Activated B cell treated with CpG ODN at 0.5 μM for 24 hours (primary cell): ENCODE measurements at regions of chr17 and their contacts with region 1.

Region 1: DNA sequence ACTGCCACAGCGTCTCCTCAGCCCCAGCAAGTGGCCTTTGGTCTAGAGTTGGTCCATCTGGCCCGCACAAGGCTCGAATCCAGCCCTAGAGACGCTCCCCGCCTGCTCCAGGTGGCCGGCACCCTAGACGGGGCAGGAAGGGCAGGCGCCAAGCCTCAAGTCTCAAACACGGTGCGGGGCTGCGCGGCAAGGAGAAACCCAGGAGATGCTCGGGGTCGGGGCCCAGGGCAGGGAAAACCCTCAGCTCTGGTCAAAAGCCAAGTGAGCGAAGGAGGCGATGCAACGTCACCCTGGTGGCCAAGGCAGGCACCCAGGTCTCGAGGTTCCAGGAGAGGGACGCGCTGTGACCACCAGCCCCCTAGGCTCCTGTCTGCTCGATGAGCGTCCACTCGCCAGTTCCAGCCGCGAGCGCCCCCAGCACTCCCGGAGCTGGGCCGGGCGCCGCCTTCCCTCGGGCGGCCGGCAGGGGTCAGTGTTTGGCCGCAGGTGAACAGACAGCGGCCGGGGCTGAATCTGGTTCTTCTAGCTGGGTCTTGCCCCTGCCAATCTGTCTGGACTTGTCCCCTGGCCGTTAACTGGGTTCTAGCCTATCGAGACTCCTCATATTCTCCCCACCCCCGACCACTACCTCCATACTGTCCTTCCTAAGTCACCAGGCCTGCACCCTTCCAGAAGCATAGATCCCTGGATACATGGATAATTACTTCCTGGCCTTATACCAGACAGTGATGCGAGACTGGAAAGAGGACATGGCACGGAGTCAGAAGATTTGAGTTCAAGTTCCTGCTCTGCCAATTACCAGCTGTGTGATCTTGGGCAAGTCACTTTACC is 44.0 kb downstream of the PRAC1 start:
- DNase-seq: peak; percentile 67
- ATAC-seq: peak; percentile 92
- H3K4me3 Mint-ChIP-seq: peak overlapping the region; percentile 35
- H3K27ac Mint-ChIP-seq: no peak overlapping the region
- H3K4me1 Mint-ChIP-seq: peaks cover 2% of the 10 kb centered on the region
- H3K27me3 Mint-ChIP-seq: peaks cover 34% of the 10 kb centered on the region
- CTCF ChIP-seq: peak; percentile 88

Region 2: DNA sequence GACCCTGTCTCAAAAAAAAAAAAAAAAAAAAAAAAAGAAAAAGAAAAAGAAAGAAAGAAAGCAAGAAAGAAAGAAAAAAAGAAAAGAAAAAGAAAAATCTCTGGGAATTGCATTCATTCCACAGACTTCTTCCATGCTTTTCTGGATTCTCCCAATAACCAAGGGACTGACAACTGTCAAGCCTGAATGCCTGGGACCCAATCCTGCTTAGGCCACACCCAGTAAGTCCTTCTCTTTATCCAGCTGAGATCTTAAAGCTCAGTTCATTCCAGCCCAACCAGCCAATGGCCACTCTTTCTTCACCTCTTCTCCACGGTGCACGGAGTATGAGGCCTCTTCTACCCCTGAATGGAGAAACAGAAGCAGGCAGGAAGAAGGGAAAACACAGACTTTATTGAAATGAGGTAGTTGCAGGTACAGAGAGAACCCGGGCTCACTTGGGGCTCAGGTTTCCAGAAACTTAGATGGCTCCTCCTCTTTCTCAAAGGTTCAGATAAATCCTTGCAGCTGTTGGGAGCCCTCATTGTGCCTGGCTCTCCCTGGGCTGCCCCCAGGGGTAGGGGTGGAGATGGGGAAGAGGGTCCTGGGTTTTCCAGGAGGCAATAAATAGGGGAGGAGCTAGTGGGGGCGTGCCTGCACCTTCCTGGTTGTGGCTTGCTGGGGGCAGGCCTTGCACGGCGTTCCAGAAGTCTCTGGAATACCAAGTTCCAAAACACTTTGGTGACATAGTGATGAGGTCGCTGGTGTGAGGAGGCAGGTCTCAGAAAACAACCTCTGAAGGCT is 150.0 kb before region 1 on chr17:
- CTCF ChIA-PET with region 1: no interaction called
- POLR2A ChIA-PET with region 1: no interaction called
- intact Hi-C with region 1: no loop called
- DNase-seq: no peak
- ATAC-seq: no peak
- H3K4me3 Mint-ChIP-seq: no peak overlapping the region
- H3K27ac Mint-ChIP-seq: no peak overlapping the region
- H3K4me1 Mint-ChIP-seq: no peaks in the 10 kb centered on the region
- H3K27me3 Mint-ChIP-seq: peaks cover 46% of the 10 kb centered on the region
- CTCF ChIP-seq: no peak

Region 3: GRCh38 chr17:48625495-48626244 is 52.7 kb before region 1 on chr17:
- CTCF ChIA-PET with region 1: no interaction called
- POLR2A ChIA-PET with region 1: no interaction called
- intact Hi-C with region 1: no loop called
- DNase-seq: peak; percentile 50
- ATAC-seq: peak; percentile 71
- H3K4me3 Mint-ChIP-seq: peak overlapping the region; percentile 85
- H3K27ac Mint-ChIP-seq: no peak overlapping the region
- H3K4me1 Mint-ChIP-seq: peaks cover 16% of the 10 kb centered on the region
- H3K27me3 Mint-ChIP-seq: peaks cover 72% of the 10 kb centered on the region
- CTCF ChIP-seq: no peak

Region 4: GRCh38 chr17:48655913-48656312 is 22.4 kb before region 1 on chr17:
- CTCF ChIA-PET with region 1: no interaction called
- POLR2A ChIA-PET with region 1: no interaction called
- intact Hi-C with region 1: no loop called
- DNase-seq: no peak
- ATAC-seq: no peak
- H3K4me3 Mint-ChIP-seq: no peak overlapping the region
- H3K27ac Mint-ChIP-seq: no peak overlapping the region
- H3K4me1 Mint-ChIP-seq: peaks cover 5% of the 10 kb centered on the region
- H3K27me3 Mint-ChIP-seq: peaks cover 11% of the 10 kb centered on the region
- CTCF ChIP-seq: no peak

Region 5: GRCh38 chr17:48704361-48705248 is 26.2 kb after region 1 on chr17:
- CTCF ChIA-PET with region 1: interaction called, 11 read pairs
- POLR2A ChIA-PET with region 1: no interaction called
- intact Hi-C with region 1: no loop called
- DNase-seq: no peak
- ATAC-seq: no peak
- H3K4me3 Mint-ChIP-seq: no peak overlapping the region
- H3K27ac Mint-ChIP-seq: no peak overlapping the region
- H3K4me1 Mint-ChIP-seq: no peaks in the 10 kb centered on the region
- H3K27me3 Mint-ChIP-seq: peaks cover 50% of the 10 kb centered on the region
- CTCF ChIP-seq: no peak

Region 6: DNA sequence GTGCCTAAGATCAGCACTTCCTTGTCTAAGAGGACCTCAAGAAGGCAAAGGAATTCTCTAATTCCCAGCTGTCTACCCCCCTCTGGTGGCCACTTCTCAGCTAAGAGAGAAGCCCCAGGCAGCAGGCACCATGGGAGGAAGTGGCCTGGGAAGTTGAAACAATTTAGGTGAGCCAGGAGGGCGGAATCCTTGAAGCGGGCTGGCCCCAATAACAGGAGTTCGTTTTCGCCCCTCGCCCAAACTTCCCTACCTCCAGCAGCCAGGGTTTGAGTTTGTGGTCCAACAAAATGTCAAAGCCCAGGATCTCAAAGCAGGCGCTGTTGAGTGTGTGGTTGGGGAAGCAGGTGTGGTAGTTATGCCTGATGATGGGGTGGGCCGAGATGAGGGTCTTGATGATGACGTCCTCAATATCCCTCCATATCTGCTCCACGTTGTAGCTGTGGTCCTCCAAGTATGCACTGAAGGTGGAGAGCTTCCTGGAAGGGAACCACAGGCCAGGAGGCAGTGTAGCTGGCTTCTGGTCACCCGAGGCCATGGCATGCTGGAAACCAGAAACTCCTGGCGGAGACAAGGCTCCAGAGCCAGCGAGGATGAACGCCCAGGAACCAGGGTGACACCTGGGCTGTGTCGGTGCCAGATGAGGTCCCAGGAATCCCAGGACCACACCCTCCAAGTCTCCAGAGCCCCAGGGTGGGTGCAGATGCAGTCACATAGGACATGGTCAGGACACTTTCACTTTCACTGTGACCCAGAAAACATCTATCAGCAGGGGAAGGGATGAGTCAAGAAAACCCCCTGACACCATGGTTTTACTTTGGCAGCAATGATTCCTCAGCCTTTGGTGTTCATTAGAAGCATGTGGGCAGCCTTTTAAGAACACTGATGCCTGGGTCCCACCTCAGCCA is 113.0 kb after region 1 on chr17:
- CTCF ChIA-PET with region 1: interaction called, 8 read pairs
- POLR2A ChIA-PET with region 1: no interaction called
- intact Hi-C with region 1: loop called (anchors 2 kb)
- DNase-seq: no peak
- ATAC-seq: peak; percentile 42
- H3K4me3 Mint-ChIP-seq: no peak overlapping the region
- H3K27ac Mint-ChIP-seq: no peak overlapping the region
- H3K4me1 Mint-ChIP-seq: peaks cover 5% of the 10 kb centered on the region
- H3K27me3 Mint-ChIP-seq: peaks cover 32% of the 10 kb centered on the region
- CTCF ChIP-seq: no peak

Region 7: GRCh38 chr17:49290690-49291359 is 612.5 kb after region 1 on chr17:
- CTCF ChIA-PET with region 1: interaction called, 6 read pairs
- POLR2A ChIA-PET with region 1: no interaction called
- intact Hi-C with region 1: loop called (anchors 10 kb)
- DNase-seq: no peak
- ATAC-seq: no peak
- H3K4me3 Mint-ChIP-seq: no peak overlapping the region
- H3K27ac Mint-ChIP-seq: no peak overlapping the region
- H3K4me1 Mint-ChIP-seq: no peaks in the 10 kb centered on the region
- H3K27me3 Mint-ChIP-seq: no peaks in the 10 kb centered on the region
- CTCF ChIP-seq: peak; percentile 26